OCI-LY7 (cell line): ENCODE measurements at regions of chr12 and their contacts with region 1.

Region 1: GRCh38 chr12:94831081-94831751 is 172.3 kb downstream of the NDUFA12 start:
- DNase-seq: peak; percentile 97
- H3K4me3 ChIP-seq: peak overlapping the region; percentile 48
- H3K27ac ChIP-seq: peak overlapping the region; percentile 97
- H3K4me1 ChIP-seq: peaks cover 49% of the 10 kb centered on the region
- CTCF ChIP-seq: no peak

Region 2: DNA sequence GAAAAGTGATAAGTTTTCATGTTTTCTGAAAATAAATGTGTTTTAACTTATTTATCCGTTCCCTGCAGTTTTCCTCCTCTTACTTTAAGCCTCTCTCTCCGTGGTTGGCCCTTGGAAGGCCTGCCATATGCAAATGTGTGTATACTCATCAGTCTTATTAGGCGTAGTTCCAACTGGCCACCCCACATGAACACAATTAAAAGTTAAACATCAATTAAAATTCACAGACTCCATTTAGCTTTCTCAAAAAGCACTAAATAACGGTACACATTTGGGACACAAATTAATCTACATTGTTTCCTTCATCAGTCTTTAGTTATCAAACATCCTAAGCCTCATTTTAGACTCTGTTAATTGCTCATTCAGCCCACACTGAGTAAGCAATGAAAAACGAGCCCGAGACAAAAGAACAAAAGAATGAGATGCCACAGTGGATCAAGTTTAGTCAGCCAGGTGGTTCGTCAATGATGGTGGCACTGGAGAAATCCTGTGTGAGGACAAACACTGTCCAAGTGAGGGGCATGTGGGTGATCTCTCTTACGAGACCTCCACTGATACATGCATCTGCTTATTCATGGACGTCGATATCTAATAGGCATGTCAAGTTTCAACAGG is 104.9 kb before region 1 on chr12:
- CTCF ChIA-PET with region 1: no interaction called
- POLR2A ChIA-PET with region 1: no interaction called
- intact Hi-C with region 1: no loop called
- DNase-seq: no peak
- H3K4me3 ChIP-seq: no peak overlapping the region
- H3K27ac ChIP-seq: no peak overlapping the region
- H3K4me1 ChIP-seq: peaks cover 46% of the 10 kb centered on the region
- CTCF ChIP-seq: no peak

Region 3: GRCh38 chr12:94769047-94769420 is 62.2 kb before region 1 on chr12:
- CTCF ChIA-PET with region 1: no interaction called
- POLR2A ChIA-PET with region 1: no interaction called
- intact Hi-C with region 1: loop called (anchors 1 kb)
- DNase-seq: peak; percentile 90
- H3K4me3 ChIP-seq: peak overlapping the region; percentile 63
- H3K27ac ChIP-seq: peak overlapping the region; percentile 97
- H3K4me1 ChIP-seq: peaks cover 61% of the 10 kb centered on the region
- CTCF ChIP-seq: no peak

Region 4: DNA sequence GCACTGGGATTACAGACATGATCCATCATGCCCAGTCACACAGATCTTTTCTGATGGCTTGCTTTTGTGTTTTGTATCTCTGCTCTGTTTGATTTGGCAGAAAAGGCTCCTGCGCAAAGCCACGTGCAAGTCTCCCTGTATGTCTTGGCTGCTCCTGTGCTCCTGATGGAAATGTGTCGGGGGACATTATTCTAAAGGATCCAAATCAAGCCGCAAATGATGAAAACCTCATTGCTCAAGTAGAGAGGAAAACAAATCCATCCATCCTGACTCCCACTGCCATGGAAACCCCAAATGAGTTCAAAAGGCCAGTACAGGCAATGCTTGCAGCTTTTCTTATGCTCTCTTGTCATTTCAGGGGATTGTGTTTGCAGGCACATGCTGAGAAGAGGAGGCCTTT is 78.4 kb after region 1 on chr12:
- CTCF ChIA-PET with region 1: no interaction called
- POLR2A ChIA-PET with region 1: no interaction called
- intact Hi-C with region 1: no loop called
- DNase-seq: no peak
- H3K4me3 ChIP-seq: no peak overlapping the region
- H3K27ac ChIP-seq: no peak overlapping the region
- H3K4me1 ChIP-seq: no peaks in the 10 kb centered on the region
- CTCF ChIP-seq: no peak